ENCODE measurements at regions of chr13 and their contacts with region 1.

Region 1: GRCh38 chr13:26698392-26699196 is 62.0 kb downstream of the GPR12 start:
- DNase-seq: peak; percentile 66
- ATAC-seq: peak; percentile 81
- H3K4me3 ChIP-seq: peak overlapping the region; percentile 27 to 55 (median 27); a peak in 5 of 6 replicates
- H3K27ac ChIP-seq: no peak overlapping the region
- H3K4me1 ChIP-seq: no peaks in the 10 kb centered on the region
- H3K27me3 ChIP-seq: peaks cover 5 to 24% of the 10 kb centered on the region in 2 experiments; a peak in 4 of 5 replicates
- CTCF ChIP-seq: peak; percentile 92
- EP300 ChIP-seq: no peak
- POLR2A ChIP-seq: no peak
- RAD21 ChIP-seq: peak; percentile 89

Region 2: GRCh38 chr13:26482451-26483197 is 216.0 kb before region 1 on chr13:
- CTCF ChIA-PET with region 1: interaction called, 27 read pairs
- POLR2A ChIA-PET with region 1: no interaction called
- in situ Hi-C with region 1: loop called (anchors 5 kb)
- intact Hi-C with region 1: loop called (anchors 1 kb)
- DNase-seq: peak; percentile 61
- ATAC-seq: peak; percentile 59
- H3K4me3 ChIP-seq: no peak overlapping the region
- H3K27ac ChIP-seq: no peak overlapping the region
- H3K4me1 ChIP-seq: no peaks in the 10 kb centered on the region
- H3K27me3 ChIP-seq: peaks cover 2 to 17% of the 10 kb centered on the region in 2 experiments; a peak in 3 of 5 replicates
- CTCF ChIP-seq: peak; percentile 72
- EP300 ChIP-seq: no peak
- POLR2A ChIP-seq: no peak
- RAD21 ChIP-seq: peak; percentile 39; the same call in 1 of the 2 replicates

Region 3: GRCh38 chr13:26656919-26657318 is 41.7 kb before region 1 on chr13:
- CTCF ChIA-PET with region 1: interaction called, 3 read pairs
- POLR2A ChIA-PET with region 1: no interaction called
- in situ Hi-C with region 1: no loop called
- intact Hi-C with region 1: loop called (anchors 5 kb)
- DNase-seq: peak; percentile 24
- ATAC-seq: peak; percentile 57
- H3K4me3 ChIP-seq: no peak overlapping the region
- H3K27ac ChIP-seq: no peak overlapping the region
- H3K4me1 ChIP-seq: no peaks in the 10 kb centered on the region
- H3K27me3 ChIP-seq: no peaks in the 10 kb centered on the region
- CTCF ChIP-seq: peak; percentile 23; the same call in 1 of the 2 replicates
- EP300 ChIP-seq: no peak
- POLR2A ChIP-seq: no peak
- RAD21 ChIP-seq: no peak

Measured in HepG2 (cell line).